Mammary epithelial cell (primary cell): ENCODE measurements at regions of chr7 and their contacts with region 1.

Region 1: GRCh38 chr7:133230591-133231194 is 22.2 kb upstream of the EXOC4 start:
- DNase-seq: peak; percentile 32
- H3K4me3 ChIP-seq: no peak overlapping the region
- H3K27ac ChIP-seq: no peak overlapping the region
- H3K4me1 ChIP-seq: no peaks in the 10 kb centered on the region
- H3K27me3 ChIP-seq: no peaks in the 10 kb centered on the region
- CTCF ChIP-seq: peak; percentile 74 to 85

Region 2: GRCh38 chr7:132836743-132837142 is 393.9 kb before region 1 on chr7:
- CTCF ChIA-PET with region 1: no interaction called
- dilution Hi-C with region 1: no loop called
- in situ Hi-C with region 1: no loop called
- intact Hi-C with region 1: loop called (anchors 10 kb)
- DNase-seq: peak; percentile 12
- H3K4me3 ChIP-seq: no peak overlapping the region
- H3K27ac ChIP-seq: no peak overlapping the region
- H3K4me1 ChIP-seq: no peaks in the 10 kb centered on the region
- H3K27me3 ChIP-seq: no peaks in the 10 kb centered on the region
- CTCF ChIP-seq: no peak

Region 3: DNA sequence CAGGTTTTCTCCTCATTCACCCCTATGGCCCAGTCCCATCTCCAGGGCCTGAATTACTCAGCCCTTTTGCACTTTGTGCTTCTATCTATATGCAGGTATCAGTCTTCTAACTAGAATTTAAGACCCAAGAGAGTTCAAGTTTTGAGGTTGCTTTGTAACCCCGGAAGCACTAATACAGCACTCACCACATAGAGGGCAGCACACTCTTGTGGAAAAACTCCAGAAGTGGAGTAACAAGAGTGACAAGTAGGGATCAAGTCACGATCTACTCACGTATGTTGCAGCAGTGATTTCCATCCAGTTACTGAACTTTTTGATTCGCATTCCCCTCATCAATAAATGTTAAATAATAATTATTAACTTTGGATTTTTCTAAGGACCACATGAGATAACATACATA is 299.8 kb before region 1 on chr7:
- CTCF ChIA-PET with region 1: no interaction called
- dilution Hi-C with region 1: no loop called
- in situ Hi-C with region 1: no loop called
- intact Hi-C with region 1: loop called (anchors 2 kb)
- DNase-seq: no peak
- H3K4me3 ChIP-seq: no peak overlapping the region
- H3K27ac ChIP-seq: no peak overlapping the region
- H3K4me1 ChIP-seq: no peaks in the 10 kb centered on the region
- H3K27me3 ChIP-seq: no peaks in the 10 kb centered on the region
- CTCF ChIP-seq: peak; percentile 2 to 50